ENCODE measurements at regions of chr3 and their contacts with region 1.

Region 1: DNA sequence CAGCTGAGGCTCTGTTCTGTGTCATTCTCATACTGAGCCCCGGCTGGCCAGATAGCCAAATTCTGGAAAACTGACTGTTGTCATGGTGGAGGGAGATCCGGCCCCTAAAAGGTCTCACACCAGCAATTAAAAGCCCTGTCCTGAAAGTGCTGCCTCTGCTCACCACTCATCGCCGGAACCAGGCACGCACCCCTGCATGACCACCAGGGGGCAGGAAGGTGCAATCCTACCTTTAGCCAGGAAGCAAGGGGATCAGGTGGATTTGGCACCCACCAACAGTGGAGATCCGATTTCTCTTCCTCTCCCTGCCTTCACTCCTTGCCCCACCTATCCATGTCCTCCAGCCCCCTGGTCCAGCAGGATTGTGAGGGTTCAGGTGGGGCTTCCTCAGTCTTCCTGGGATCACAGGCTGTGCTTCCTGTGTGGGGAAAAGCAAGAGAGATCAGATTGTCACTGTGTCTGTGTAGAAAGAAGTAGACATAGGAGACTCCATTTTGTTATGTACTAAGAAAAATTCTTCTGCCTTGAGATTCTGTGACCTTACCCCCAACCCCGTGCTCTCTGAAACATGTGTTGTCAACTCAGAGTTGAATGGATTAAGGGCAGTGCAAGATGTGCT is 16.1 kb upstream of the CACNA2D2 start:
- H3K4me3 Mint-ChIP-seq: no peak overlapping the region
- H3K27ac Mint-ChIP-seq: no peak overlapping the region
- H3K4me1 Mint-ChIP-seq: peaks cover 59% of the 10 kb centered on the region
- H3K27me3 Mint-ChIP-seq: peaks cover 39% of the 10 kb centered on the region

Region 2: GRCh38 chr3:50503504-50504342 is 15.9 kb before region 1 on chr3 and contains the start of gene CACNA2D2:
- intact Hi-C with region 1: no loop called
- H3K4me3 Mint-ChIP-seq: peak within 1 kb of the TSS; percentile 17
- H3K27ac Mint-ChIP-seq: no peak within 1 kb of the TSS
- H3K4me1 Mint-ChIP-seq: no peaks in the 10 kb centered on the region
- H3K27me3 Mint-ChIP-seq: peaks cover 68% of the 10 kb centered on the region

Region 3: DNA sequence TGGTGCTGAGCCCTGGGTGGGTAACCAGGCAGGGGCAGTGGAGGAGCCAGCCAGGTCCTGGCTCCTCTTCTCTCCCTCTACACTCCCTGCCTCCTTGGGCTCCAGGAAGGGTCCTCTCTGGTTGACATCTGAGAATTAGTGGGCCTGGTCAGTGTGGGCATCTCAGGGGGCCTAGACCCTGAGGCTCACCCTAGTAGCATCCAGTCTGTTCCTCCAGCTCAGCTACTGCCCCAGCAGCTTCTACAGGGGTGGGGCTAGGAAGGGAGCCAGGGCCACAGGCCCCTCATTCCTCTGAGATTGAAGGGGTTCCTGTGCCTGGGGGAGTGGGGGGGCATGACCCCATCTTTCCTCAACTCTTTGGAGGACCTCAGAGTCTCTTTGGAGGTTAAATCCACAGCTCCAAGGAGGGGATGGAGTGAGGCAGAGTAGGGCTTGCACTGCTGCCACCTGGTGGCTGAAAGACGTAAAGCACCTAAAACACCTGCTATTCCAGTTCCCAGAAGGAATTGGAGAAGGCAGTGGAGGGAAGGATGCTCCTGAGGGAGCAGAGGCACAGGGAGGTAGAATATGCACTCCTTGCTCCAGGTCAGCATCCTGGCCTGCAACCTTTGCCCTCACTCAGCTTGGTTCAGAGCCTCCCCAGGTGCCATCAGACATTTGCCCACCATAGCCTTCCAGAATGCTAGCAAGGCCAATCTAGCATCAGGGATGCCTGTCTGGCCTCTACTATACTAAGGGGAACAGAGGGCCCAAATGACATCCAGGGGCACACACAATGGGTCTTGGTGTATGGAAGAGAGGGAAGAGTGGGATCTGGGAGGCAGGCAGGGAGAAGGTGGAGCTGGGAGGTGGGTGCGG is 22.8 kb after region 1 on chr3:
- intact Hi-C with region 1: loop called (anchors 1 kb)
- H3K4me3 Mint-ChIP-seq: no peak overlapping the region
- H3K27ac Mint-ChIP-seq: no peak overlapping the region
- H3K4me1 Mint-ChIP-seq: no peaks in the 10 kb centered on the region
- H3K27me3 Mint-ChIP-seq: peaks cover 37% of the 10 kb centered on the region

Measured in dendritic cell treated with granulocyte-macrophage colony-stimulating factor and Interleukin-4, amounts not matched to agents 40 ng/mL and 50 ng/mL, for 4 days (primary cell).